Activated CD8-positive, alpha-beta T cell treated with anti-CD3 and anti-CD28 coated beads, Interleukin-2, amount 10 ng/mL, durations not matched to agents 7 days and 5 days (primary cell): ENCODE measurements at regions of chr6 and their contacts with region 1.

Region 1: DNA sequence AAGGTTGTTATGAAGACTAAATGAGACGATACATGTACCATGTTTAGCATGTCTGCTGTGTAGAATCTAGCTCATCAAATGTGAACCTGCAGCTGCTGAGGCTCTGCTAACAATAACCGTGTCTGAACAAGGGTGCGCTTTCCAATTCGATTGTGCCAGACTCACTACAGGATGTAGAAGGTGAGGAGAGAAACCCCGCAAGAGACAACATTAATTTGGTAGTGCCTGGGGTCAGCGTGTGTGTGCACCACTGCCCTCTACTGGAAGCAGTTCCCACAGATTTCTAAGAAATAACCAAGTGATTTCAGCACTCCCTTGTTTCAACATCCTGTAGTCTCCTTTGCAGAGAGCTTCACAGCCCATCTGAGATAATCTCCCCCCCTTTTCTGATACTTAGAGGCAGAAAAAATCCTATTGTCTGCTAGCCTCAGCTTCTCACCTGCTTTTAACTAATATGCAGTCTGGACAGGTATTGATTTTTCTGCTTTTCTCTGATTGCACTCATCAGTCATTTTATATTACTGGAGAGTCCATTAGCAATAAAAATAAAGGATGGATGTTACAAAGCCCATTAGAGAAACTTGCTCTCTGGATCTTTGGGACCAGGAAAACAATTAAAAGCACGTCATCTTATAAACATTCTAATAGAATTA is 96.7 kb upstream of the BACH2 start:
- DNase-seq: peak; percentile 89
- ATAC-seq: peak; percentile 74
- H3K4me3 Mint-ChIP-seq: no peak overlapping the region
- H3K27ac Mint-ChIP-seq: peak overlapping the region; percentile 64
- H3K4me1 Mint-ChIP-seq: peaks cover 52% of the 10 kb centered on the region
- H3K27me3 Mint-ChIP-seq: no peaks in the 10 kb centered on the region

Region 2: DNA sequence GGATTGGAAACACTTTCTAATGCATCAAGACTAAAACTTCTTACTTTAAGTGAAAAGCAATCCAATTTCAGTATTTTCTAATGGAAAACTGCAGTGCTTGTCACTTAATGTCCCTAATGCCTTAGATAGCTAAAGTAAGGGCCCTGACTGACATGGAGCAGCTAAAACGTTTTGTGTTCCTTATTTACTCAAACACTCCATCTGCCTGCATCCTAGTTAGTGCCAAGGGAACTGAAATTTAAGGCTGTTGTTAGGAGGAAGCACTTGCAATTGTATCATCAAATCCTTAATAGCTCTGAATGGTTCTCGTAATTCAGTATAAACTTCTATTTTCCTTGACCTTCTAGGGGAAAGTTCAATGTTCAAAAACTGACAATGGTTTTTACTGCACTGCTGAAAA is 371.6 kb before region 1 on chr6:
- CTCF ChIA-PET with region 1: no interaction called
- POLR2A ChIA-PET with region 1: no interaction called
- DNase-seq: no peak
- ATAC-seq: no peak
- H3K4me3 Mint-ChIP-seq: no peak overlapping the region
- H3K27ac Mint-ChIP-seq: no peak overlapping the region
- H3K4me1 Mint-ChIP-seq: peaks cover 45% of the 10 kb centered on the region
- H3K27me3 Mint-ChIP-seq: no peaks in the 10 kb centered on the region

Region 3: DNA sequence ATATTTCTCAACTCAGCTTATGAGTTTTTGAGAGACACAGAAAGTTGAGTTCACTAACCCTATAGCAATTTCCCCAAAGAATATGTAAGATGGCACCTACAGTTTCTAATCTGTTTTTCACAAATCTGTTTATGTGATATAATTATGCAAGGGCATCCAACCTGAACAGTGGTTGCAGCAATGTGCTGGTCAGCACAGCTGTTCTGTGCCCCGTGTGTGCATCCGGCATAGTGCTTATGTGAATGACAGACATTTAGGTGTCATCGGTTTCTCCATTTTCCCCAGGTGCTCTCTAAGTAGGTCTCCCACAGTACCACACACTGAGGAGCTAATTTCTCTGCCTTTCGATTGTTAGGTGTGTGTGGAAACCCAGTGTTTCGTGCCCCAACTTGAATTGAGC is 89.0 kb before region 1 on chr6:
- CTCF ChIA-PET with region 1: interaction called, 12 read pairs
- POLR2A ChIA-PET with region 1: no interaction called
- DNase-seq: no peak
- ATAC-seq: no peak
- H3K4me3 Mint-ChIP-seq: no peak overlapping the region
- H3K27ac Mint-ChIP-seq: no peak overlapping the region
- H3K4me1 Mint-ChIP-seq: no peaks in the 10 kb centered on the region
- H3K27me3 Mint-ChIP-seq: peaks cover 27% of the 10 kb centered on the region

Region 4: GRCh38 chr6:90375681-90376439 is 17.5 kb before region 1 on chr6:
- CTCF ChIA-PET with region 1: interaction called, 27 read pairs
- POLR2A ChIA-PET with region 1: interaction called, 4 read pairs
- DNase-seq: no peak
- ATAC-seq: no peak
- H3K4me3 Mint-ChIP-seq: no peak overlapping the region
- H3K27ac Mint-ChIP-seq: no peak overlapping the region
- H3K4me1 Mint-ChIP-seq: peaks cover 2% of the 10 kb centered on the region
- H3K27me3 Mint-ChIP-seq: peaks cover 9% of the 10 kb centered on the region

Region 5: GRCh38 chr6:90425161-90425641 is 31.8 kb after region 1 on chr6:
- CTCF ChIA-PET with region 1: interaction called, 26 read pairs
- POLR2A ChIA-PET with region 1: interaction called, 17 read pairs
- DNase-seq: no peak
- ATAC-seq: peak; percentile 94
- H3K4me3 Mint-ChIP-seq: peak overlapping the region; percentile 64
- H3K27ac Mint-ChIP-seq: peak overlapping the region; percentile 91
- H3K4me1 Mint-ChIP-seq: peaks cover 27% of the 10 kb centered on the region
- H3K27me3 Mint-ChIP-seq: no peaks in the 10 kb centered on the region

Region 6: GRCh38 chr6:90466154-90466940 is 73.0 kb after region 1 on chr6:
- CTCF ChIA-PET with region 1: interaction called, 24 read pairs
- POLR2A ChIA-PET with region 1: interaction called, 5 read pairs
- DNase-seq: no peak
- ATAC-seq: peak; percentile 31
- H3K4me3 Mint-ChIP-seq: peak overlapping the region; percentile 13
- H3K27ac Mint-ChIP-seq: peak overlapping the region; percentile 71
- H3K4me1 Mint-ChIP-seq: peaks cover 88% of the 10 kb centered on the region
- H3K27me3 Mint-ChIP-seq: peaks cover 3% of the 10 kb centered on the region